Sigmoid colon (tissue), 7 donors: ENCODE measurements at regions of chr13 and their contacts with region 1.

Region 1: GRCh38 chr13:113208424-113209335 is at the start of gene PCID2:
- DNase-seq: peak; percentile 95
- H3K4me3 ChIP-seq: peak within 1 kb of the TSS; percentile 64 to 97 (median 86)
- H3K27ac ChIP-seq: peak within 1 kb of the TSS; percentile 94 to 100 (median 100)
- H3K4me1 ChIP-seq: peaks cover 0 to 79% (median 65%) of the 10 kb centered on the region in 4 donors
- H3K27me3 ChIP-seq: no peaks in the 10 kb centered on the region
- CTCF ChIP-seq: no peak
- EP300 ChIP-seq: peak in 2 of 4 donors; percentile 43 to 65
- POLR2A ChIP-seq: peak; percentile 71 to 81
- total RNA-seq, gene PCID2: 44.1 to 70.9 (median 54.8) TPM

Region 2: DNA sequence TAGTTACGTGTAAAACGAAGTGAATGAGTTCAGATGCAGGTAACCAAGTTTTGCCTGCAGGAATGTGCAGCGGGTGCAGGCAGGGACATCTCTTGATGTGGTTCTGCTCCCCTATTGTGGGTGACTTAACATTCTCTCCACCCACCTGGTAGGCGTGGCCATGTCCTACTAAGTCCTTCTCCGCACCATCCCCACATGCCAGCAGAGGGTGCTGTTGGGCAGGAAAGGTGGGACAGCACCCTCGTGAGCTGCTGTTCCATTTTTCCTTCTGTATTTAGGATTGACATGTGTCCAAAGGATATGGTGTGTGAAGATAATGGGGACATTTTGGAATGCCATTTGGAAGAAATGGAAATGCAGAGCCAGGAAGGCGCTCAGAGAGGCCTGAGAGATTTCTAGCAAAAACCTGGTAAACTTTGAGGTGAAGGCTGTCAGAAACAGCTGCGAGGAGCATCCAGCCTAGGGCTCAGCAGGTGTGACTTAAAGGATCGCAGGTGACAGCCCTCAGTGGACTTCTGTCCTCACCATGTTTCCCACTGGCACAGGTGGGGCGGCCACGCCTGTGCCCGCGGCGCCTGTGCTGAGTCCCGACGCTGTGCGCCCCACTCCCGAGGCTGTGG is 265.9 kb before region 1 on chr13:
- intact Hi-C with region 1: loop called (anchors 5 kb)
- DNase-seq: peak; percentile 96
- H3K4me3 ChIP-seq: peak overlapping the region in 3 of 4 donors; percentile 47 to 68 (median 54)
- H3K27ac ChIP-seq: peak overlapping the region; percentile 21 to 70 (median 43)
- H3K4me1 ChIP-seq: peaks cover 0 to 18% (median 12%) of the 10 kb centered on the region in 4 donors
- H3K27me3 ChIP-seq: no peaks in the 10 kb centered on the region
- CTCF ChIP-seq: peak; percentile 74 to 91 (median 86)
- EP300 ChIP-seq: no peak
- POLR2A ChIP-seq: no peak

Region 3: GRCh38 chr13:113122550-113123225 is 86.0 kb before region 1 on chr13 and contains the start of gene F10:
- intact Hi-C with region 1: no loop called
- DNase-seq: no peak
- H3K4me3 ChIP-seq: peak within 1 kb of the TSS in 3 of 4 donors; percentile 7 to 9 (median 7)
- H3K27ac ChIP-seq: peak within 1 kb of the TSS in 3 of 4 donors; percentile 18 to 51 (median 46)
- H3K4me1 ChIP-seq: no peaks in the 10 kb centered on the region
- H3K27me3 ChIP-seq: no peaks in the 10 kb centered on the region
- CTCF ChIP-seq: no peak
- EP300 ChIP-seq: no peak
- POLR2A ChIP-seq: no peak
- total RNA-seq, gene F10: 3.8 to 10.0 (median 6.8) TPM

Region 4: GRCh38 chr13:113296842-113297369 is 88.2 kb after region 1 on chr13 and contains the start of gene LAMP1:
- intact Hi-C with region 1: loop called (anchors 1 kb)
- DNase-seq: peak; percentile 99
- H3K4me3 ChIP-seq: peak within 1 kb of the TSS; percentile 78 to 100 (median 94)
- H3K27ac ChIP-seq: peak within 1 kb of the TSS; percentile 79 to 90 (median 88)
- H3K4me1 ChIP-seq: peaks cover 0 to 32% (median 26%) of the 10 kb centered on the region in 4 donors
- H3K27me3 ChIP-seq: no peaks in the 10 kb centered on the region
- CTCF ChIP-seq: no peak
- EP300 ChIP-seq: peak in 3 of 4 donors; percentile 11 to 79 (median 66)
- POLR2A ChIP-seq: peak; percentile 29 to 55
- total RNA-seq, gene LAMP1: 77.3 to 91.0 (median 87.5) TPM

Region 5: GRCh38 chr13:113364311-113364889 is 155.7 kb after region 1 on chr13:
- intact Hi-C with region 1: loop called (anchors 2 kb)
- DNase-seq: peak; percentile 71
- H3K4me3 ChIP-seq: peak overlapping the region; percentile 55 to 92 (median 83)
- H3K27ac ChIP-seq: peak overlapping the region; percentile 74 to 86 (median 80)
- H3K4me1 ChIP-seq: peaks cover 3 to 24% (median 18%) of the 10 kb centered on the region in 4 donors
- H3K27me3 ChIP-seq: no peaks in the 10 kb centered on the region
- CTCF ChIP-seq: no peak
- EP300 ChIP-seq: no peak
- POLR2A ChIP-seq: peak; percentile 60 to 66

Region 6: DNA sequence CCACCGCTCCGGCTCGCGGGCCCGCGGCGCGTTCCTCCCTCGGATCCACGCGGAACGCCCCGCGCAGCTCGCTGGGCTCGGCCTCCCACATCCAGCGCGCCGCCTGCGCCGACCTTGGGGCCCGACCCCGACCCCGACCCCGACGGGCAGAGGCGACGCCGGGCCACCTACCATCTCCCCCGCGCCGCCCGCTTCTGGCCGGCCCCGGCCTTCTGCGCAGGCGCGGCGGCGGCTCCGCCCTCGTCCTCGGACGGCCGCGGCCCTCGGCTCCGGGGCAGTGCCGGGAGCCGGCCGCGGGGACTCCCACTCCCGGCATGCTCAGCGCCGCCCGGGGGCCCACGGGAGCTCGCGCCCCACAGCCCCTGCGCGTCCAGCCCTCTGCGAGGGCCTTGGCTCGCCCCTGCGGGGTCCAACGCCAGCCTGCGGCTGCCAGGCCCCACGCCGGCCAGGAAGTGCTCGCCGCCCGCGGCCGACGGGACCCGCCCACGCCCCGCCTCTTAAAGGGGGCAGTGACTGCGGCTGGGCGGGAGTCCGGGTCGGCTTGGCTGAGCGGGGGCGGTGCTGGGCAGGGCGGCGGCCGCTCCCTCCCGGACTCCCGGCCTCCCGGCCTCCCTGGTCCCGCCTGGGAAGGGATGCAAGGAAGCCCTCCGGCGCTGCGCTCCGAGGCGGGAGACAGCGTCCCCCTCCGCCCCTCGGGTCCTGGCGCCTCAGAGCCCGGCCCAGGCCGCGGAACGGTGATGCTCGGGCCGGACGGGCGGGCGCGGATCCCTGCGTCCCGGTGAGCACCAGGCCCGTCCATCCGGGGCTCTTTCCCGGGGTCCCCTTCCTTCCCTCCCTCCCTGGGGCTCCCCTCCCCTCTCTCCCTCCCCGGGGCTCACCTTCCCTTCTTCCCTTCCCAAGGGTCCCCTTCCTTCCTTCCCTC is 282.1 kb after region 1 on chr13 and contains the start of gene DCUN1D2:
- intact Hi-C with region 1: loop called (anchors 5 kb)
- DNase-seq: peak; percentile 97
- H3K4me3 ChIP-seq: peak within 1 kb of the TSS; percentile 88 to 94 (median 92)
- H3K27ac ChIP-seq: peak within 1 kb of the TSS; percentile 87 to 95 (median 93)
- H3K4me1 ChIP-seq: peaks cover 0 to 84% (median 68%) of the 10 kb centered on the region in 4 donors
- H3K27me3 ChIP-seq: no peaks in the 10 kb centered on the region
- CTCF ChIP-seq: no peak
- EP300 ChIP-seq: no peak
- POLR2A ChIP-seq: peak; percentile 64 to 75
- total RNA-seq, gene DCUN1D2: 20.6 to 33.0 (median 27.6) TPM